ENCODE measurements at regions of chr1 and their contacts with region 1.

Region 1: GRCh38 chr1:38018864-38019343 is 6.4 kb downstream of the UTP11 start:
- DNase-seq: peak in 1 of 3 donors; percentile 49
- H3K4me3 ChIP-seq: no peak overlapping the region
- H3K4me3 Mint-ChIP-seq: no peak overlapping the region
- H3K27ac ChIP-seq: no peak overlapping the region
- H3K27ac Mint-ChIP-seq: peak overlapping the region in 2 of 7 donors; percentile 41 to 53
- H3K4me1 ChIP-seq: peaks cover 3 to 5% of the 10 kb centered on the region in 2 donors
- H3K4me1 Mint-ChIP-seq: peaks cover 4% of the 10 kb centered on the region
- H3K27me3 ChIP-seq: no peaks in the 10 kb centered on the region
- H3K27me3 Mint-ChIP-seq: peaks cover 0 to 2% (median 0%) of the 10 kb centered on the region in 3 donors
- CTCF ChIP-seq: peak; percentile 68

Region 2: GRCh38 chr1:37931361-37932158 is 87.3 kb before region 1 on chr1:
- intact Hi-C with region 1: loop called in 1 of 2 experiments (anchors 5 kb)
- DNase-seq: peak; percentile 88 to 93 (median 91)
- H3K4me3 ChIP-seq: peak overlapping the region; percentile 69 to 81 (median 71)
- H3K4me3 Mint-ChIP-seq: peak overlapping the region; percentile 88 to 97
- H3K27ac ChIP-seq: peak overlapping the region; percentile 16 to 71
- H3K27ac Mint-ChIP-seq: peak overlapping the region; percentile 41 to 90 (median 76)
- H3K4me1 ChIP-seq: peaks cover 17 to 19% of the 10 kb centered on the region in 2 donors
- H3K4me1 Mint-ChIP-seq: peaks cover 29% of the 10 kb centered on the region
- H3K27me3 ChIP-seq: no peaks in the 10 kb centered on the region
- H3K27me3 Mint-ChIP-seq: no peaks in the 10 kb centered on the region
- CTCF ChIP-seq: no peak

Region 3: GRCh38 chr1:37983546-37983945 is 35.4 kb before region 1 on chr1:
- intact Hi-C with region 1: loop called in 1 of 2 experiments (anchors 5 kb)
- DNase-seq: no peak
- H3K4me3 ChIP-seq: no peak overlapping the region
- H3K4me3 Mint-ChIP-seq: no peak overlapping the region
- H3K27ac ChIP-seq: no peak overlapping the region
- H3K27ac Mint-ChIP-seq: no peak overlapping the region
- H3K4me1 ChIP-seq: peaks cover 4% of the 10 kb centered on the region in 2 donors
- H3K4me1 Mint-ChIP-seq: peaks cover 3% of the 10 kb centered on the region
- H3K27me3 ChIP-seq: no peaks in the 10 kb centered on the region
- H3K27me3 Mint-ChIP-seq: no peaks in the 10 kb centered on the region
- CTCF ChIP-seq: no peak

Region 4: DNA sequence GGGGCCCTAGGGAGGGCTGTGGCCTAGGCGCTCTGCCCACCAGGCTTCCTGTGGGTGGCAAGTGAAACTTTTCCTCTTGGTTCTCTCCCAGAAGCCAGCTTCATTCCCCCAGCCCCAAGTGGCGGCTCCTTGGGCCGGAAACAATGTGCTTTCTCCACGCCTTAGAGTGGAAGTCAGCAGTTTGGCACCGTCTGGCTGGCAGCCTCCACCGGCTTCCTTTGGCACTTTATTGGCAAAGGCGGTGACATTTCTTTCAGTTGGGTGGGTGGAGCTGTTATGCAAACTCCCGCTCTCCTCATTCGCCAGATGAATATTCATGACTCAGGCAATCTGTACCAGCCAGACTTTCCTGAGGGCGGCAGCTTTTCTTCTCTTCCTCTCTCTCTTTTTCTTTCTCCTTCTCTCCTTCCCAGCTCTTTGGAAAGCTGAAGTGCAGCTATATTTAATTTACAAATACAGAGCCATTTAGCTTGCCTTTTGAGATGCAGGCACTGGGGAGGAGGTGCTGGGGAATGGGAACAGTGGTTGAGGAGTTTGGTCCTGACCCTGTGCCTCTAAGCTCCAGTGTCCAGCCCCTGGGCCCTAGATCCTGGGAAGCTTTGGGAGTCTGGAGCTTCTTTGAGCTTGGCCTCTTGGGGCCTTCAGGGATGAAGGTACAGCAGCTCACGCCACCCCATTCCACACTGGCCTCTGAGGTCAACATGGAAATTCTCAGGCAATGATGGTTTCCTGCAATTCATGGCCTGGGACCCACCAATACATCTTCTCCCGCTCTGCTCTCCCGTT is 95.5 kb after region 1 on chr1:
- intact Hi-C with region 1: no loop called
- DNase-seq: no peak
- H3K4me3 ChIP-seq: no peak overlapping the region
- H3K4me3 Mint-ChIP-seq: no peak overlapping the region
- H3K27ac ChIP-seq: no peak overlapping the region
- H3K27ac Mint-ChIP-seq: no peak overlapping the region
- H3K4me1 ChIP-seq: no peaks in the 10 kb centered on the region
- H3K4me1 Mint-ChIP-seq: peaks cover 4% of the 10 kb centered on the region
- H3K27me3 ChIP-seq: no peaks in the 10 kb centered on the region
- H3K27me3 Mint-ChIP-seq: peaks cover 0 to 9% (median 5%) of the 10 kb centered on the region in 3 donors
- CTCF ChIP-seq: no peak

Measured in CD14-positive monocyte (primary cell).